A549 (cell line): ENCODE measurements at regions of chr7 and their contacts with region 1.

Region 1: DNA sequence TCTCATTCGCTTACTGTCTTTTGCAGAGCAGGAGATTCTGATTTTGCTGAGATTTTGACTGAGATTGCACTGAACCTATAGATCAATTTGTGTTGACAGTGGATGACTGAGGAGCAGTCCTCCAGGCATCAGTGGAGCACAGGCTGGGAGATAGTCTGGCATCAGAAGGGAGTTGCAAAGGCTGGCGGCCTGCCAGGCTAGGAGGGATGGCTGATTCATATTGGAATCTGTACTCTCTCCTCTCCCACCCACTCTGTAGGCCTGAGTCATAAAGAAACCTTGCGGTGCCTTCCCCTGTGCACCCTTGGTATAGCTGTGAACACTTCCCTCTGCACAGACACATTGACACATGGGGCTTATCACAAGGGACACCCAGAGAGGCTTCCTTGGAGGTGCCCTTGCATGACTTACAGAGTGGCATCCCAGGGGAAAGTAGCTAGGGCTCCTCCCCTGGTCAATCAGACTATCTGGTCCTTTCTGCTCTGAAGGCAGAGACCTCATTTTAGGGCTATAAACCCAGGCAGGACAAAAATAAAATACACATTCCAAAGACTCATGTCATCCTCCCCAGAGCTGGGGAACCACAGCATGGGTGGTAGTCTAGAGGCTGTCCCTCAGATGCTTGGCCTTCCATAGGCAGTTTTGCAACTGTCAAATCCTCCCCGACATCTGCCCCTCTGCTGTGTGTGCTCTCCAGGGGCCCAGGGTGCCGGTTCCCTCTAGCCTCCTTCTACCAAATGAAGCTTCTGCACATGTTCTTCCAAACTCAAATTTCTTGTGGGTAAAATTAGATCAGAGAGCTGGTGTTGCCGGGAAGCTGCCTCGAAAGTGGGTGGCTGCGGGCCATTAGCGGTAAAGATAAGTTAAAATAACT is 37.4 kb upstream of the EEPD1 start:
- DNase-seq: peak; percentile 84 to 95
- ATAC-seq: peak; percentile 97 to 98
- H3K4me3 ChIP-seq: no peak overlapping the region
- H3K27ac ChIP-seq: peak overlapping the region; percentile 82 to 88
- H3K4me1 ChIP-seq: peaks cover 55% of the 10 kb centered on the region
- CTCF ChIP-seq: no peak
- EP300 ChIP-seq: peak; percentile 71 to 73; a peak in 2 of 5 replicates
- POLR2A ChIP-seq: no peak
- RAD21 ChIP-seq: peak; percentile 29 to 56; a peak in 4 of 5 replicates

Region 2: DNA sequence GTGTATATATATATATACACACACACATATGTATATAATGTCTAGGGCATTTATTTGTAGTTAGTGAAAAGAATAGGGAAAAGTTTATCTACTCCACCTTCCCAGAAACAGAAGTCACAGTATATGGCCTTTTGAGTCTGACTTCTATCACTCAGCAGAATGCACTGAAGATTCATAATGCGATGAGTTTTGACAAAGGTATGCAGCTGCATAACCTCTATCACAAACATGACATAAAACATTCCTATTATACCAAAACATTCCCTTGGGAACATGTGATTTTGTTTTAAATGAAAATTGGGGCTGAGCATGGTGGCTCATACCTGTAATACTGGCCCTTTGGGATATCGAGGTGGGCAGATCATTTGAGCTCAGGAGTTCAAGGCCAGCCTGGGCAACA is 100.0 kb before region 1 on chr7:
- CTCF ChIA-PET with region 1: no interaction called
- POLR2A ChIA-PET with region 1: no interaction called
- DNase-seq: no peak
- ATAC-seq: peak in 1 of 2 experiments; percentile 63; a peak in 3 of 6 replicates
- H3K4me3 ChIP-seq: no peak overlapping the region
- H3K27ac ChIP-seq: no peak overlapping the region
- H3K4me1 ChIP-seq: 0 out of 3 replicates have a peak, but pooled peaks cover 3% of the 10 kb centered on the region
- CTCF ChIP-seq: no peak
- EP300 ChIP-seq: no peak
- POLR2A ChIP-seq: no peak
- RAD21 ChIP-seq: no peak

Region 3: GRCh38 chr7:36128448-36129047 is 12.9 kb after region 1 on chr7:
- CTCF ChIA-PET with region 1: interaction called, 23 read pairs
- POLR2A ChIA-PET with region 1: interaction called, 3 read pairs
- DNase-seq: peak; percentile 77 to 90
- ATAC-seq: peak; percentile 95 to 97
- H3K4me3 ChIP-seq: peak overlapping the region; percentile 37
- H3K27ac ChIP-seq: peak overlapping the region; percentile 82 to 88
- H3K4me1 ChIP-seq: peaks cover 31% of the 10 kb centered on the region
- CTCF ChIP-seq: peak; percentile 72
- EP300 ChIP-seq: no peak
- POLR2A ChIP-seq: no peak
- RAD21 ChIP-seq: peak; percentile 32 to 47